Activated CD8-positive, alpha-beta T cell treated with anti-CD3 and anti-CD28 coated beads, Interleukin-2, amount 10 ng/mL, durations not matched to agents 7 days and 5 days (primary cell): ENCODE measurements at regions of chr14 and their contacts with region 1.

Region 1: GRCh38 chr14:39266871-39267591 is 33.3 kb downstream of the MIA2 start:
- DNase-seq: peak; percentile 83
- ATAC-seq: peak; percentile 86
- H3K4me3 Mint-ChIP-seq: peak overlapping the region; percentile 93
- H3K27ac Mint-ChIP-seq: peak overlapping the region; percentile 97
- H3K4me1 Mint-ChIP-seq: peaks cover 54% of the 10 kb centered on the region
- H3K27me3 Mint-ChIP-seq: no peaks in the 10 kb centered on the region

Region 2: DNA sequence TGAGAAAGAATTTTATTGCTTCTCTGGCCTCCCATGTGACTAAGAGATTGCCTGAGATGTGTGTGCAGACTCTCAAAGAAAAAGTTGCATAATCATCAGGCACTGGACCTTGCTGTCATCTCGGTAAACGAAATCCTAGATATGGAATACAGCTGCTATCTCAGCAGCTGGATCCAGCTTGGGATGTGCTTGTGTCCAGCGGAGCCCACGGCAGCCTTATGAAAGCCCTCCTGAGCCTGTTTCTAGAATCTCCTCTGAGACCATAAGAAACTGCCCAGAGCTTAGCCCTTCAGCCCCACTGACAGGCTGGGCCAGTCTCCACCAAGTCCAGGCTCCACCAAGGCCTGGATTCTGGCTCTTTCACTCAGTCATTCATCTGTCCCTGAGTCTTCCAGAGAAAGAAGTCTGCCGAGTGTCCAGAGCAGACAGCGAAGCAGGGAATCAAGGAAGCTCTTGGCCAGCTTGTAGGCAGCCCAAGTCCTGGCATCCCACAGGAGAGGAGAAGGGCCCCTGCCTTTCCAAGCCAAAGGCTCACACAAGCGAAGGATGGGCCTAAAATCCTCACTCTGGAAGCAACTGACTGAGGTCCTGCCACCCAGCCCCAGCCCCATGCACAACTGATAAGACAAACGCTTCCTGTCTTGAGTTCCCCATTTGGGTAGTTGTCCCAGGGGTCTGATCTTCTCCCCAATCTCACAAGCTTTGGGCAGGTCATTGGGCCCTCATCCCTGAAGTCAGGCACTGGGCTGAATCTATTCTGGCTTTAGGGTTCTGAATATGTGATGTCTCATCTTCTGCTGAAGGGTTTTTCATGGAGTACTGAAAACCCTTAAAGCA is 261.8 kb before region 1 on chr14:
- CTCF ChIA-PET with region 1: no interaction called
- POLR2A ChIA-PET with region 1: no interaction called
- DNase-seq: no peak
- ATAC-seq: no peak
- H3K4me3 Mint-ChIP-seq: no peak overlapping the region
- H3K27ac Mint-ChIP-seq: no peak overlapping the region
- H3K4me1 Mint-ChIP-seq: no peaks in the 10 kb centered on the region
- H3K27me3 Mint-ChIP-seq: no peaks in the 10 kb centered on the region

Region 3: DNA sequence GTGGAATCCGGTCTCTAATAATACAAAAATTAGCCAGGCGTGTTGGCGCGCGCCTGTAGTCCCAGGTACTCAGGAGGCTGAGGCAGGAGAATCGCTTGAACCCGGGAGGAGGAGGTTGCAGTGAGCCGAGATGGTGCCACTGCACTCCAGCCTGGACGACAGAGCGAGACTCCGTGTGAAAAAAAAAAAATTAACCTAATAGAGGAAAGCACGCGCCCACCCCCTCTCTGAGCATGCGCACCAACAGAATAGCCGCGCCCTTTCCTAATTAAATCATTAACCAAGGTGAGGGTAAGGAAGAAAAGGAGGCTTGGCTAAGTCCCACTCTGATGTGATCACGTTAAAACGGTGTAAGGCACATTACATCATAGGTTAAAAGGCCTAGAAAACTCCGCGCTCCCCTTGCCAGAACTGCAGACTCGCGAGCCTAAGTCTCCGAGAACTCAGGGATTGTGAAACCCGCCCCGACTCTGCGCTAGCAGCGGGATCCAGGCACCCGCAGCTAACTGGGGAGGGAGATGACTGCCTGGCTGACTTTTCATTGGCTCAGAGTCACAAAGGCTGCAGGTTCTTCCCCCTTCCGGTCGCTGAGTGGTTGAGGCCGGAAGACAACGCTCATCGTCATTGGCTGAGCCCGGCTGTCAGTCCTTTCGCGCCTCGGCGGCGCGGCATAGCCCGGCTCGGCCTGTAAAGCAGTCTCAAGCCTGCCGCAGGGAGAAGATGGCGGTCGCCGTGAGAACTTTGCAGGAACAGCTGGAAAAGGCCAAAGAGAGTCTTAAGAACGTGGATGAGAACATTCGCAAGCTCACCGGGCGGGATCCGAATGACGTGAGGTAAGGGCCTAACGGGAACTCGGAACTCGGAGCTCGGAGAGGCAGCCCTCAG is 92.2 kb before region 1 on chr14 and contains the start of gene PNN:
- CTCF ChIA-PET with region 1: no interaction called
- POLR2A ChIA-PET with region 1: interaction called, 17 read pairs
- DNase-seq: peak; percentile 99
- ATAC-seq: peak; percentile 92
- H3K4me3 Mint-ChIP-seq: peak within 1 kb of the TSS; percentile 98
- H3K27ac Mint-ChIP-seq: peak within 1 kb of the TSS; percentile 99
- H3K4me1 Mint-ChIP-seq: peaks cover 45% of the 10 kb centered on the region
- H3K27me3 Mint-ChIP-seq: no peaks in the 10 kb centered on the region
- total RNA-seq, gene PNN: 94.1 to 103 TPM